ENCODE measurements at regions of chr3 and their contacts with region 1.

Region 1: GRCh38 chr3:197599089-197599765 is 43.5 kb upstream of the BDH1 start:
- DNase-seq: peak; percentile 57
- ATAC-seq: peak; percentile 98
- H3K4me3 Mint-ChIP-seq: no peak overlapping the region
- H3K27ac Mint-ChIP-seq: no peak overlapping the region
- H3K4me1 Mint-ChIP-seq: peaks cover 9% of the 10 kb centered on the region
- H3K27me3 Mint-ChIP-seq: no peaks in the 10 kb centered on the region
- CTCF ChIP-seq: peak; percentile 21

Region 2: DNA sequence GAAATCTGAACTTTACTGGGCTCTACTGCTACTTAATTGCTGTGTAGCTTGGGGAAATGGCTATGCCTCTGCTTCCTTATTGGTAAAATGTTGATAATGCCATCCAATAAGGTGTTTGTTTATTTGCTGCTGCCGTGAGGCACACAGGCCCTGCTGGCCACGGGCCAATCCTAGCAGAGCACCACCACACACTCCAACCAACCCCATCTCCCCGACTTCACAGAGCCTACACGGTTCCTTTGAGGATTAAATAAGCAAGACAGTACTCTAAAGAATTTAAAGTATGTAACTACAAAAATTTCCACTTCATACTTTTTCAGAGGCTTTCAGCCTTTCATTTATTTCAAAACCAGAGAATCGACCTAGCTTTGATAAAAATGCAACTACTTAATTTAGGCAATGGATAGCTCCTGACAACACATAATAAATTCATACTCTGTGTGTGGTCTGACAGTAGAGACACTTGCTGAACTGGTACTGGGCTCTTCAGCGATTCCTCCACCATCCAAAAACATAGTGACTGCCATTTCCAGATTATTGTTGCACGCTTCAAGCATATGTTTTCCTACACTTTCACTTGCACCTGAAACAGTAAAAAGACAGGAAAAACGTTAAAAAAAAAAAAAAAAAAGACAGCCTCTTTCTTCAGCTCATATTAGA is 1192.3 kb before region 1 on chr3:
- CTCF ChIA-PET with region 1: no interaction called
- POLR2A ChIA-PET with region 1: no interaction called
- intact Hi-C with region 1: no loop called
- DNase-seq: no peak
- ATAC-seq: no peak
- H3K4me3 Mint-ChIP-seq: no peak overlapping the region
- H3K27ac Mint-ChIP-seq: no peak overlapping the region
- H3K4me1 Mint-ChIP-seq: peaks cover 19% of the 10 kb centered on the region
- H3K27me3 Mint-ChIP-seq: no peaks in the 10 kb centered on the region
- CTCF ChIP-seq: no peak

Region 3: GRCh38 chr3:197667978-197668377 is 68.8 kb after region 1 on chr3:
- CTCF ChIA-PET with region 1: interaction called, 3 read pairs
- POLR2A ChIA-PET with region 1: no interaction called
- intact Hi-C with region 1: loop called (anchors 2 kb)
- DNase-seq: no peak
- ATAC-seq: no peak
- H3K4me3 Mint-ChIP-seq: no peak overlapping the region
- H3K27ac Mint-ChIP-seq: no peak overlapping the region
- H3K4me1 Mint-ChIP-seq: peaks cover 19% of the 10 kb centered on the region
- H3K27me3 Mint-ChIP-seq: no peaks in the 10 kb centered on the region
- CTCF ChIP-seq: no peak

Region 4: GRCh38 chr3:197942956-197943556 is 343.8 kb after region 1 on chr3:
- CTCF ChIA-PET with region 1: interaction called, 11 read pairs
- POLR2A ChIA-PET with region 1: no interaction called
- intact Hi-C with region 1: no loop called
- DNase-seq: no peak
- ATAC-seq: peak; percentile 85
- H3K4me3 Mint-ChIP-seq: no peak overlapping the region
- H3K27ac Mint-ChIP-seq: no peak overlapping the region
- H3K4me1 Mint-ChIP-seq: no peaks in the 10 kb centered on the region
- H3K27me3 Mint-ChIP-seq: no peaks in the 10 kb centered on the region
- CTCF ChIP-seq: no peak

Measured in activated B cell treated with CpG ODN at 0.5 μM for 24 hours (primary cell).